A549 (cell line): ENCODE measurements at regions of chr19 and their contacts with region 1.

Region 1: GRCh38 chr19:40381321-40381720 is 8.7 kb downstream of the HIPK4 start:
- DNase-seq: peak in 1 of 2 experiments; percentile 68
- ATAC-seq: peak; percentile 27 to 43; a peak in 3 of 6 replicates
- H3K4me3 ChIP-seq: no peak overlapping the region
- H3K27ac ChIP-seq: no peak overlapping the region
- H3K4me1 ChIP-seq: no peaks in the 10 kb centered on the region
- CTCF ChIP-seq: no peak
- EP300 ChIP-seq: no peak
- POLR2A ChIP-seq: no peak
- RAD21 ChIP-seq: no peak

Region 2: GRCh38 chr19:40365613-40366401 is 15.5 kb before region 1 on chr19:
- CTCF ChIA-PET with region 1: interaction called, 14 read pairs
- POLR2A ChIA-PET with region 1: no interaction called
- DNase-seq: peak; percentile 70 to 96
- ATAC-seq: peak; percentile 72 to 90
- H3K4me3 ChIP-seq: peak overlapping the region; percentile 31
- H3K27ac ChIP-seq: peak overlapping the region; percentile 30 to 78
- H3K4me1 ChIP-seq: peaks cover 16% of the 10 kb centered on the region
- CTCF ChIP-seq: no peak
- EP300 ChIP-seq: no peak
- POLR2A ChIP-seq: peak; percentile 87
- RAD21 ChIP-seq: no peak

Region 3: DNA sequence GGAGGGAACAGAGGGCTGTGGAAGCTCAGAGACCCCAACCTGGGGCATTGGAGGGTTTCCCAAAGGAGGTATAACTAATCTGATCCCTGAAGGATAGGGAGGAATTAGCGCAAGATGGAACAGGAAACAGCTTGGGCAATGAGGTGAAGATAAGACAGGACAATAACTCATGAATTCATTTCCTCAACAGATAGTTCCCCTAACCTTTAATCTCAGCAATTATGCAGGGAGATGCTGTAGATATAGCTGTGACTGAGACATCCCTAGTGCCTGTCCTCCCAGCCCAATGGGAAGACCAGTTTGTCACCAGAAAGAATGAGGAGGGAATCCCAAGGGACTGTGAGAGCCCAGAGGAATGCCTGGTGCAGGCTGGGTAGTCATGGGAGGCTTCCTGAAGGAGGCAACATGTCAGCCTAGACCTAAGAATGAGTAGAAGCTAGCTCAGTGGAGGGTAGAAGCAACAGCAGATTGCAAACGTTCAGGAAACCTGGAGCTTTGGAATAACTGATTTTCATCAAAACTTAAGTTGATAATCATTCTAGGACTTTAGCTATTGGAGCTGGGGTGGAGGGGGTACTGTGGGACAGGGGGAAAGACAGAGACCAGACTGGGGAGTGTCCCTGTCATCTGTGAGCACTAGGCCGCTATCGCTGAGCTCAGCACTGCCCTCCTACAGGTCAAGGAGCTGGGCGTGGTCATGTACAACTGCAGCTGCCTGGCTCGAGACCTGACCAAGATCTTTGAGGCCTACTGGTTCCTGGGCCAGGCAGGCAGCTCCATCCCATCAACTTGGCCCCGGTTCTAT is 10.1 kb before region 1 on chr19:
- CTCF ChIA-PET with region 1: interaction called, 14 read pairs
- POLR2A ChIA-PET with region 1: no interaction called
- DNase-seq: no peak
- ATAC-seq: peak in 1 of 2 experiments; percentile 12; a peak in 2 of 6 replicates
- H3K4me3 ChIP-seq: no peak overlapping the region
- H3K27ac ChIP-seq: no peak overlapping the region
- H3K4me1 ChIP-seq: peaks cover 8% of the 10 kb centered on the region
- CTCF ChIP-seq: no peak
- EP300 ChIP-seq: no peak
- POLR2A ChIP-seq: no peak
- RAD21 ChIP-seq: no peak